Heart right ventricle (tissue), 16 donors: ENCODE measurements at regions of chr3 and their contacts with region 1.

Region 1: GRCh38 chr3:108505811-108506210 is 4.6 kb downstream of the MYH15 start:
- DNase-seq: no peak
- ATAC-seq: peak in 1 of 8 donors; percentile 47
- H3K4me3 ChIP-seq: no peak overlapping the region
- H3K27ac ChIP-seq: no peak overlapping the region
- H3K4me1 ChIP-seq: peaks cover 0 to 11% (median 0%) of the 10 kb centered on the region in 9 donors
- H3K27me3 ChIP-seq: no peaks in the 10 kb centered on the region
- CTCF ChIP-seq: peak in 3 of 9 donors; percentile 14 to 30 (median 29)

Region 2: DNA sequence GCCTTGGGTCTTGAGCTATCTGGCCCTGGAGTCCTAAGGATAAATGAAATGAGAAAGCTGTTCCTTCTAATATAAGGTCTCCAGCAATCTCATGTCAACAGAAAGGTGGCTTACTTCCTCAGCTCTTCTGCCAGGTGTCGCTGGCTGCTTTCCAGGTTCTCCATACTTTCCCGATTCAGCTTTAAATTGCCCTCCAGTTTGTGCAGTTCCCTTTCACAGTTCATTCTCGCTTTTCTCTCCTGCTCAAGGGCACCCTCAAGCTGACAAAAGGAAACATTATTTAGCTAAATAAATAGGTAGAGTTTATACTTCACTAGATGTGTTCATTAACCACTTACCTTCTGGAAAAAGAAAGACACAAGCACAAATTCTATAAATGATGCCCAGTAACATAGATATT is 68.4 kb before region 1 on chr3:
- intact Hi-C with region 1: no loop called
- DNase-seq: no peak
- ATAC-seq: no peak
- H3K4me3 ChIP-seq: no peak overlapping the region
- H3K27ac ChIP-seq: no peak overlapping the region
- H3K4me1 ChIP-seq: peaks cover 0 to 3% (median 0%) of the 10 kb centered on the region in 9 donors
- H3K27me3 ChIP-seq: no peaks in the 10 kb centered on the region
- CTCF ChIP-seq: no peak

Region 3: GRCh38 chr3:108528459-108529252 is 22.8 kb after region 1 on chr3:
- intact Hi-C with region 1: no loop called
- DNase-seq: peak in 1 of 2 donors; percentile 20
- ATAC-seq: peak; percentile 81 to 93 (median 85)
- H3K4me3 ChIP-seq: no peak overlapping the region
- H3K27ac ChIP-seq: peak overlapping the region; percentile 47 to 80 (median 68)
- H3K4me1 ChIP-seq: peaks cover 0 to 53% (median 23%) of the 10 kb centered on the region in 9 donors
- H3K27me3 ChIP-seq: no peaks in the 10 kb centered on the region
- CTCF ChIP-seq: no peak

Region 4: DNA sequence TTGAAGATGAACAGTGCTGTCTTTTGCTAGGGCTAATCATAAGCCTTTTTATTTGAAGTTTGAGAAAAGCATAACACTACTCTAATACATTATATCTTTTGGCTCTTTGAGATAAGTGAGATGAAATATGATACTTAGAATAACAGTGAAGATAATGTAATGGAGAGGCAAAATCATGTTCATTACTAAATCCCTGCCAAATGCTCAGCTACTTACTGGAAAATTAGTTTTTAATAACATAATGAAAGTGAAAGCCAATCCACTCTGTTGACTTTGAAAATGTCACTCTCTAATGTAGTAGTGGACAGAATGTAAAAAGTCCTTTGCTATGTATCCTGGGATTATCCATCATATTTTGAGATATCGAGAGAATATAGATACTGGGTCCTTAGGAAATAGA is 40.4 kb after region 1 on chr3:
- intact Hi-C with region 1: loop called in 3 of 10 experiments (anchors 5 kb)
- DNase-seq: no peak
- ATAC-seq: peak in 2 of 8 donors; percentile 28 to 33
- H3K4me3 ChIP-seq: peak overlapping the region in 7 of 10 donors; percentile 19 to 37 (median 34)
- H3K27ac ChIP-seq: peak overlapping the region in 6 of 10 donors; percentile 15 to 68 (median 39)
- H3K4me1 ChIP-seq: peaks cover 0 to 12% (median 0%) of the 10 kb centered on the region in 9 donors
- H3K27me3 ChIP-seq: no peaks in the 10 kb centered on the region
- CTCF ChIP-seq: no peak